ENCODE measurements at regions of chr1 and their contacts with region 1.

Region 1: GRCh38 chr1:71561729-71562128 is 480.9 kb upstream of the ZRANB2 start:
- DNase-seq: peak; percentile 69
- ATAC-seq: peak; percentile 79
- H3K4me3 ChIP-seq: peak overlapping the region; percentile 21; the same call in 1 of the 2 replicates
- H3K27ac ChIP-seq: peak overlapping the region; percentile 96
- H3K4me1 ChIP-seq: peaks cover 18% of the 10 kb centered on the region
- H3K27me3 ChIP-seq: no peaks in the 10 kb centered on the region
- CTCF ChIP-seq: no peak

Region 2: GRCh38 chr1:71533950-71534349 is 27.8 kb before region 1 on chr1:
- CTCF ChIA-PET with region 1: no interaction called
- POLR2A ChIA-PET with region 1: no interaction called
- intact Hi-C with region 1: loop called (anchors 2 kb)
- DNase-seq: no peak
- ATAC-seq: no peak
- H3K4me3 ChIP-seq: no peak overlapping the region
- H3K27ac ChIP-seq: no peak overlapping the region
- H3K4me1 ChIP-seq: no peaks in the 10 kb centered on the region
- H3K27me3 ChIP-seq: no peaks in the 10 kb centered on the region
- CTCF ChIP-seq: no peak

Region 3: DNA sequence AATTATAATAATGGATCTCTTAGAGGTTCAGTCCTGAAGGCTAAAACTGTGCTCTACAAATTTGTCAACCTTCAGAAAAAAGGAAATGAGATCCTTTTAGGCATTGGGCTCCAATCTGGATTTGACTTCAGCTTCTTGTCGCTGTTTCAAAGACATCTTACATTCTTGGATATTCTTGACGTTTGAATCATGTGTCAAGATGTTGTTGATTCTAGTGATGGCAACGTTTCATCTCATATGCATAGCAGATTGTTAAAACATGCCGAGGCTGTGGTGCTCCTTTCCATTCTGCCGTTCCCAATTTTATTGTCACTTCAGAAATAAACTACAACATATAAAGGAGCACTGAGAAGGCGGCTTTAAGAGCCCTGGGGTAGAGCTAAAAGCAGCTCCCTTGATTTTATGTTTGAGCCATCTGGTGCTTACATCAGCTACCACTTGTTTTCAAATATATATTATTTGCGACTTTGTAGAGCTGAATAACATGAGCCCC is 13.3 kb before region 1 on chr1:
- CTCF ChIA-PET with region 1: no interaction called
- POLR2A ChIA-PET with region 1: no interaction called
- intact Hi-C with region 1: no loop called
- DNase-seq: no peak
- ATAC-seq: no peak
- H3K4me3 ChIP-seq: no peak overlapping the region
- H3K27ac ChIP-seq: no peak overlapping the region
- H3K4me1 ChIP-seq: no peaks in the 10 kb centered on the region
- H3K27me3 ChIP-seq: no peaks in the 10 kb centered on the region
- CTCF ChIP-seq: no peak